ENCODE measurements at regions of chr1 and their contacts with region 1.

Region 1: DNA sequence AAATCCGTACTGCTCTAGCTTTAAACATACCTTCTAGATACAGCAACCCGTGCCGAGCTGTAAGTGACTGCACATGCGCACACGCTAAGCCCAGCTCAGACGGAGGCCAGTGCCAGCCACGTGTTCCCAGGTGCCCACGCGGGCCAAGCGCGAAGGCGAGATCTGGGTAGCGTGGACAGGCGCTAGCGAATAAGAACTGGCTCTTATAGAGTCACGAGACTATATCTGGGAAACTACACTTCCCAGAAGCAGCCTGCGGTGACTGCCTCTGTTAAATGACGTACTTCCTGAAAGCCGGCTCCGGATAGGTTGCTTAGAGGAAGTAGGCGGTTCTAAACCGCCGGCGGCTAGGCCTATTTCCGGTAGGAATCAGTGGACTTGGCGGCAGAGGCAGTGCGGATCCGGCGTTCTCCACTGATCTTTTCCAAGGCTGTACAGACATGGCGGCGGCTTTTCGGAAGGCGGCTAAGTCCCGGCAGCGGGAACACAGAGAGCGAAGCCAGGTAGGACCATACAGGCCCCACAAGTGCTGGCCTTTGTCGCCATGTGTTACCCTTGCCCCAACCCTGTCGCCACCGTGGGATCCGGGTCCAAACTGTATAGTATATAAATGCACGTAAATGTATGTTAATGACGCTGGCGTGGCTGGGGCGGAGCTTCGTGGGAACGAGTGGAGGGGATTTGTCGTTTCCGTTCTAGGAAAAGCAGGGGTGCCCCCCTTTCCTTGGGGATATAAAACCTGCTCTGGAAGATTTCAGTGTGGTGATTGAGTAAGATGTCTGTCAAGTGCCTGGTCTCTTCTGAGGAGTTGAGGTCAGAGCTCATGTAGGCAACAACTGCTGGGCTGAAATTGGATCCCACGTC is at the start of gene UTP11:
- DNase-seq: peak; percentile 98
- H3K4me3 ChIP-seq: peak within 1 kb of the TSS; percentile 82
- CTCF ChIP-seq: no peak

Region 2: GRCh38 chr1:37755290-37755689 is 257.3 kb before region 1 on chr1:
- CTCF ChIA-PET with region 1: no interaction called
- POLR2A ChIA-PET with region 1: no interaction called
- DNase-seq: no peak
- H3K4me3 ChIP-seq: no peak overlapping the region
- CTCF ChIP-seq: no peak

Region 3: DNA sequence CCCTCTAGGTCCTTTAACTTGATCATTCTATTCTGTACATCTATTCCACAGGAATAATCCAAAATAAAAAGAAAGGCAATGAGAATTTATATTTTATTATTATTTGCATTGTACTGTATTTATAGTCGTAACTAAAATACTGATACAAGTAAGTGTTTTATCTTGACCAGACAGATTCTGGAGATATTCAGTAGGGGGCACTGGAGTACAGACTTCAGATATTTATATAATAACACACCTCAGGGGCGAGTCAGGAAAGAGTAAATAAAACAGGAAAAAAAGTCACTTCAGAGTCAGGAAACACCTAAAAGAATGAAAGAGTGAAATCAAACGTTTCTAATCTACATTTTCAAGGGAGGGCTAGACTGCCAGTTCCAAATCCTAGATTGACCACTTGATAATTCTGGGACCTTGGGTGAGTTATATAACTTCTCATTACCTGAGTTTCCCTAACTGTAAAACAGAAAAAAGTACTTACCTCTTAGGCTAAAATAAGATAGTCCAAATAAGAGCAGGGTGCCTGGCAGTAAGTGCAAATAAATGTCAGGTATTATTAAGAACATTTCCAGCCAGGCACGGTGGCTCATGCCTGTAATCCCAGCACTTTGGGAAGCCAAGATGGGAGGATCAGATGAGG is 122.1 kb before region 1 on chr1:
- CTCF ChIA-PET with region 1: no interaction called
- POLR2A ChIA-PET with region 1: no interaction called
- DNase-seq: peak; percentile 4
- H3K4me3 ChIP-seq: no peak overlapping the region
- CTCF ChIP-seq: no peak

Region 4: DNA sequence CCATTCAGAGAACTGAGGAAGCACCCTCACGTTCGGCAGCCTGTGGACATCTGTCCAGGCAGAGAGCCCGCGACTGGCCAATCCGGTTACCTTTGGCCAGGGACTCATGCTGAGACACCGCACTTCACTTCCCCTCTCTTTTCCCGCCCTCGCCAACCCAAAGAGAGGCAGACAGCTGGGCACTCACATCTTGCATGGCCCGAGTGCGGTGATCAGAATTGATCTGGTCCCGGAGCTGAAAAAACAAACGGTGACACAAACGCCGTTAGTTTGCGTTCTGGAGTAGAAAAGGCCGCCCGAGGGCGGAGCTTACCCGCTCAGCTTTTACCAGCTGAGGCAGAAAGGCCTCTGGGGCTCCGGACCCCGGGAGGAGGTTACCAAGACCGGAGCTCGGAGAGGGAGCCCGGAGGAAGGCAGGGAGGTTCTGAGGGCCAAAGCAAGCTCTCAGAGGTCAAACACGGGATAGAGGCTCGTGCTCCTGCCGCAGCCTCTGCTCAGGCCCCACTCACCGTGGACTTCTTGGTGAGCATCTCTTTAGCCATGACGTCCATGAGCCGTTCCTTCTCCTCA is 23.1 kb before region 1 on chr1:
- CTCF ChIA-PET with region 1: interaction called, 398 read pairs
- POLR2A ChIA-PET with region 1: interaction called, 6 read pairs
- DNase-seq: no peak
- H3K4me3 ChIP-seq: peak overlapping the region; percentile 100
- CTCF ChIP-seq: no peak

Region 5: GRCh38 chr1:37999430-38000232 is 13.0 kb before region 1 on chr1:
- CTCF ChIA-PET with region 1: interaction called, 398 read pairs
- POLR2A ChIA-PET with region 1: interaction called, 26 read pairs
- DNase-seq: no peak
- H3K4me3 ChIP-seq: peak overlapping the region; percentile 36
- CTCF ChIP-seq: no peak

Region 6: GRCh38 chr1:38834937-38835827 is 822.6 kb after region 1 on chr1:
- CTCF ChIA-PET with region 1: interaction called, 200 read pairs
- POLR2A ChIA-PET with region 1: interaction called, 4 read pairs
- DNase-seq: peak; percentile 47
- H3K4me3 ChIP-seq: no peak overlapping the region
- CTCF ChIP-seq: peak; percentile 69